Colonic mucosa (tissue), 4 donors: ENCODE measurements at regions of chr1 and their contacts with region 1.

Region 1: GRCh38 chr1:89356658-89357400 is 7.0 kb upstream of the GBP6 start:
- DNase-seq: no peak
- H3K4me3 ChIP-seq: no peak overlapping the region
- H3K27ac ChIP-seq: no peak overlapping the region
- H3K4me1 ChIP-seq: no peaks in the 10 kb centered on the region
- H3K27me3 ChIP-seq: no peaks in the 10 kb centered on the region
- CTCF ChIP-seq: no peak

Region 2: DNA sequence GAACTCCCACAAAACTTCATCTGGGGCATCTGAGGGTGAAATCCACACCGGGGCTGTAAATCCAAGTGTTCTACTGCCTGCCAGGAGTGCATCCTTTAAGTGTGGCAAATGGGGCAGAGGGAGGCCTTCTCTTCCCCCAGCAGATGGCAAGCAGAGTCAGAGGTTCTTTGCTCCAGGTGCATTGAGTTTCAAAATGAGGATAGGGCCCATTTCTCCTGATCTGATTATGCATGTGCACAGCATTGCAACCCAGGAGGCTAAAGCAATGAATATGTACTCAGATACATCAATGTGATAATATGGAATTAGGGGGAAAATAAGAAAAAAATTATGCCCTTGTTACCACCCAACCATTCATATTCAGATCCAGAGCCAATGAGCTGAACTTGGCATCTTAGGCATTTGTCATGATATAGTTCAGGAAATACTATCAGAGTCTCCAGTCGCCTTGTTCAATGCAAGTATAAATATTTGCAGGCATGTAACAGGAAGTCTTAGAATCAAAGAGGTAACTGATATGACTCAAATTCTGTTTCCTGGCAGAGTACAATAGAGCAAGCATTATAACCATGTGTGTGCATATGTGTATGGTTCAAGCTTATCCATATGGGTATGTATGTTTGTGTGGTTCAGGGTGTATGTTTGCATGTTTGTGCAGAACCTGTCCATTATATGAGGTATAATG is 1146.6 kb before region 1 on chr1:
- intact Hi-C with region 1: no loop called
- DNase-seq: no peak
- H3K4me3 ChIP-seq: no peak overlapping the region
- H3K27ac ChIP-seq: no peak overlapping the region
- H3K4me1 ChIP-seq: no peaks in the 10 kb centered on the region
- H3K27me3 ChIP-seq: no peaks in the 10 kb centered on the region
- CTCF ChIP-seq: no peak

Region 3: DNA sequence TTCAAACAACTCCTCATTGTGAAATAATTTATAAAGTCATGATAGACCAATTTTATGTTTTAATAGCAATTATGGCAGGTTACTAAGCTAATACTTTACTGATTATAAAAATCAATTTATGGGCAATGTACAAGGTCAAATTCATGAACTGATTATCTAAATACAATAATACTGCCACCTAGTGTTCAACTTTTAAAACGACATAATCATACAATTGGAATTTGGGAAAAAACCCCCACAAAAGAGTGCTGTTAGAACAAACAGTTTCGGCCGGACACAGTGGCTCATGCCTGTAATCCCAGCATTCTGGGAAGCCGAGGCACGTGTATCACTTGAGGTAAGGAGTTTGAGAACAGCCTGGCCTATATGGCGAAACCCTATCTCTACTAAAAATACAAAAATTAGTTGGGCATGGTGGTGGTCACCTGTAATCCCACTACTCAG is 479.4 kb before region 1 on chr1:
- intact Hi-C with region 1: no loop called
- DNase-seq: no peak
- H3K4me3 ChIP-seq: no peak overlapping the region
- H3K27ac ChIP-seq: no peak overlapping the region
- H3K4me1 ChIP-seq: no peaks in the 10 kb centered on the region
- H3K27me3 ChIP-seq: no peaks in the 10 kb centered on the region
- CTCF ChIP-seq: peak; percentile 56

Region 4: GRCh38 chr1:88998716-88999115 is 358.1 kb before region 1 on chr1:
- intact Hi-C with region 1: loop called (anchors 2 kb)
- DNase-seq: no peak
- H3K4me3 ChIP-seq: no peak overlapping the region
- H3K27ac ChIP-seq: no peak overlapping the region
- H3K4me1 ChIP-seq: no peaks in the 10 kb centered on the region
- H3K27me3 ChIP-seq: no peaks in the 10 kb centered on the region
- CTCF ChIP-seq: peak; percentile 17